GM18951 (cell line): ENCODE measurements at regions of chr1 and their contacts with region 1.

Region 1: GRCh38 chr1:184805667-184806295 is 51.1 kb upstream of the EDEM3 start:
- POLR2A ChIP-seq: no peak

Region 2: DNA sequence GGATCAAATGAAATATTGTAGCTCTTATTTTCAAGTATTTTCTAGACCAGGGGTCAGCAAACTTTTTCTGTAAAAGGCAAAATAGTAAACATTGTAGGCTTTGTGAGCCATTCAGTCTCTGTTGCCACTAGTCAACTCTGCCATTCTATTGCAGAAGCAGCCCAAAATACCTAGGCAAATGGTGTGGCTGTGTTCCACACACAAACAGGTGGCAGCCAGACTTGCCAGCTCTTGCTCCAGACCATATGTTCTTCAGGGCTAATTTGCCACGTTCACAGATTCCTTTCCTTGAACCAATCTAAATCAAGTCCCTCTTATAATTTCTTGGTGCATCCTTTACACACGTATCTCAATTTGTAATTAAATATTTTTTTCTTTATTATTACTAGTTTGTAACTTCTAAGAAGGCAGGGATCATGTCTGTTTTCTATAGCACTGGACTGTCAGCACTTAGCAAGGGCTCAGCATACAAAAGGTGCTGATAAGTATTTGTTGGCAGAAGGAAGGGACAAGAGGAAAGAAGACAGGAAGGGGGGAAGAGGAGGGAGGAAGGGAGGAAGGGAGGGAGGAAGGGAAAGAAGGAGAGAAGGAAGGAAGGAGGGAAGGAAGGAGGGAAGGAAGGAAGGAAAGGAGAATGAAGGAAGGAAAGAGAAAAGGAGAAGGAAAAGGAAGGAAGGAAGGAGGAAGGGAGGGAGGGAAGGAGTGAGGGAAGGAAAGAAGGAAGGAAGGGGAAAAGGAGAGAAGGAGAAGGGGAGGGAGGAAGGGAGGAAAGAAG is 55.4 kb after region 1 on chr1:
- in situ Hi-C with region 1: no loop called
- POLR2A ChIP-seq: no peak

Region 3: GRCh38 chr1:184982002-184982954 is 176.5 kb after region 1 on chr1:
- in situ Hi-C with region 1: loop called (anchors 5 kb)
- POLR2A ChIP-seq: no peak

Region 4: GRCh38 chr1:185156854-185157598 is 351.2 kb after region 1 on chr1 and contains the starts of genes SWT1 and TRMT1L:
- in situ Hi-C with region 1: loop called (anchors 25 kb)
- POLR2A ChIP-seq: peak; percentile 88

Region 5: GRCh38 chr1:185681034-185681633 is 875.4 kb after region 1 on chr1:
- in situ Hi-C with region 1: loop called (anchors 25 kb)
- POLR2A ChIP-seq: no peak